Left ventricle myocardium inferior (tissue), 1 donor: ENCODE measurements at regions of chr20 and their contacts with region 1.

Region 1: GRCh38 chr20:9756660-9757059 is 82.2 kb downstream of the PAK5 start:
- DNase-seq: no peak
- H3K4me3 ChIP-seq: no peak overlapping the region
- H3K27ac ChIP-seq: no peak overlapping the region
- H3K4me1 ChIP-seq: no peaks in the 10 kb centered on the region
- H3K27me3 ChIP-seq: no peaks in the 10 kb centered on the region
- CTCF ChIP-seq: no peak

Region 2: GRCh38 chr20:9815632-9816031 is 59.0 kb after region 1 on chr20:
- intact Hi-C with region 1: loop called (anchors 10 kb)
- DNase-seq: no peak
- H3K4me3 ChIP-seq: no peak overlapping the region
- H3K27ac ChIP-seq: no peak overlapping the region
- H3K4me1 ChIP-seq: no peaks in the 10 kb centered on the region
- H3K27me3 ChIP-seq: no peaks in the 10 kb centered on the region
- CTCF ChIP-seq: no peak

Region 3: GRCh38 chr20:9978397-9979004 is 221.8 kb after region 1 on chr20:
- intact Hi-C with region 1: no loop called
- DNase-seq: no peak
- H3K4me3 ChIP-seq: no peak overlapping the region
- H3K27ac ChIP-seq: no peak overlapping the region
- H3K4me1 ChIP-seq: no peaks in the 10 kb centered on the region
- H3K27me3 ChIP-seq: peaks cover 12% of the 10 kb centered on the region
- CTCF ChIP-seq: peak; percentile 79